ENCODE measurements at regions of chr3 and their contacts with region 1.

Region 1: GRCh38 chr3:125594581-125595011 is 701 bp downstream of the OSBPL11 start:
- DNase-seq: peak in 4 of 9 donors; percentile 10 to 25 (median 16)
- ATAC-seq: no peak
- H3K4me3 ChIP-seq: peak overlapping the region; percentile 82
- H3K4me3 Mint-ChIP-seq: peak overlapping the region; percentile 90 to 99 (median 94)
- H3K27ac ChIP-seq: peak overlapping the region; percentile 90
- H3K27ac Mint-ChIP-seq: peak overlapping the region; percentile 73 to 95 (median 89)
- H3K4me1 ChIP-seq: peaks cover 4 to 15% of the 10 kb centered on the region in 2 donors
- H3K4me1 Mint-ChIP-seq: peaks cover 32 to 50% (median 42%) of the 10 kb centered on the region in 7 donors
- H3K27me3 ChIP-seq: no peaks in the 10 kb centered on the region
- H3K27me3 Mint-ChIP-seq: no peaks in the 10 kb centered on the region

Region 2: GRCh38 chr3:123816673-123817207 is 1777.9 kb before region 1 on chr3:
- CTCF ChIA-PET with region 1: no interaction called
- POLR2A ChIA-PET with region 1: no interaction called
- intact Hi-C with region 1: no loop called
- DNase-seq: no peak
- ATAC-seq: no peak
- H3K4me3 ChIP-seq: no peak overlapping the region
- H3K4me3 Mint-ChIP-seq: no peak overlapping the region
- H3K27ac ChIP-seq: no peak overlapping the region
- H3K27ac Mint-ChIP-seq: no peak overlapping the region
- H3K4me1 ChIP-seq: no peaks in the 10 kb centered on the region
- H3K4me1 Mint-ChIP-seq: no peaks in the 10 kb centered on the region
- H3K27me3 ChIP-seq: no peaks in the 10 kb centered on the region
- H3K27me3 Mint-ChIP-seq: peaks cover 0 to 27% (median 8%) of the 10 kb centered on the region in 5 donors

Region 3: GRCh38 chr3:123960781-123961507 is 1633.7 kb before region 1 on chr3 and contains the start of gene CCDC14:
- CTCF ChIA-PET with region 1: no interaction called
- POLR2A ChIA-PET with region 1: no interaction called
- intact Hi-C with region 1: loop called in 1 of 2 experiments (anchors 2 kb)
- DNase-seq: peak; percentile 43 to 81 (median 60)
- ATAC-seq: peak; percentile 91
- H3K4me3 ChIP-seq: peak within 1 kb of the TSS; percentile 85
- H3K4me3 Mint-ChIP-seq: peak within 1 kb of the TSS; percentile 93 to 98 (median 96)
- H3K27ac ChIP-seq: peak within 1 kb of the TSS; percentile 78
- H3K27ac Mint-ChIP-seq: peak within 1 kb of the TSS; percentile 82 to 96 (median 91)
- H3K4me1 ChIP-seq: peaks cover 0 to 12% of the 10 kb centered on the region in 2 donors
- H3K4me1 Mint-ChIP-seq: peaks cover 12 to 35% (median 30%) of the 10 kb centered on the region in 7 donors
- H3K27me3 ChIP-seq: no peaks in the 10 kb centered on the region
- H3K27me3 Mint-ChIP-seq: peaks cover 0 to 30% (median 8%) of the 10 kb centered on the region in 5 donors
- total RNA-seq, gene CCDC14: 24.6 to 48.1 (median 37.3) TPM

Region 4: GRCh38 chr3:125519678-125520589 is 74.7 kb before region 1 on chr3 and contains the start of gene SNX4:
- CTCF ChIA-PET with region 1: no interaction called
- POLR2A ChIA-PET with region 1: interaction called, 12 read pairs
- intact Hi-C with region 1: loop called (anchors 1 kb)
- DNase-seq: peak; percentile 70 to 87 (median 82)
- ATAC-seq: peak; percentile 97
- H3K4me3 ChIP-seq: peak within 1 kb of the TSS; percentile 71
- H3K4me3 Mint-ChIP-seq: peak within 1 kb of the TSS; percentile 89 to 98 (median 96)
- H3K27ac ChIP-seq: peak within 1 kb of the TSS; percentile 87
- H3K27ac Mint-ChIP-seq: peak within 1 kb of the TSS; percentile 85 to 96 (median 92)
- H3K4me1 ChIP-seq: peaks cover 0 to 4% of the 10 kb centered on the region in 2 donors
- H3K4me1 Mint-ChIP-seq: peaks cover 20 to 47% (median 37%) of the 10 kb centered on the region in 7 donors
- H3K27me3 ChIP-seq: no peaks in the 10 kb centered on the region
- H3K27me3 Mint-ChIP-seq: peaks cover 0 to 2% (median 0%) of the 10 kb centered on the region in 5 donors
- total RNA-seq, gene SNX4: 19.3 to 31.8 (median 25.2) TPM

Region 5: DNA sequence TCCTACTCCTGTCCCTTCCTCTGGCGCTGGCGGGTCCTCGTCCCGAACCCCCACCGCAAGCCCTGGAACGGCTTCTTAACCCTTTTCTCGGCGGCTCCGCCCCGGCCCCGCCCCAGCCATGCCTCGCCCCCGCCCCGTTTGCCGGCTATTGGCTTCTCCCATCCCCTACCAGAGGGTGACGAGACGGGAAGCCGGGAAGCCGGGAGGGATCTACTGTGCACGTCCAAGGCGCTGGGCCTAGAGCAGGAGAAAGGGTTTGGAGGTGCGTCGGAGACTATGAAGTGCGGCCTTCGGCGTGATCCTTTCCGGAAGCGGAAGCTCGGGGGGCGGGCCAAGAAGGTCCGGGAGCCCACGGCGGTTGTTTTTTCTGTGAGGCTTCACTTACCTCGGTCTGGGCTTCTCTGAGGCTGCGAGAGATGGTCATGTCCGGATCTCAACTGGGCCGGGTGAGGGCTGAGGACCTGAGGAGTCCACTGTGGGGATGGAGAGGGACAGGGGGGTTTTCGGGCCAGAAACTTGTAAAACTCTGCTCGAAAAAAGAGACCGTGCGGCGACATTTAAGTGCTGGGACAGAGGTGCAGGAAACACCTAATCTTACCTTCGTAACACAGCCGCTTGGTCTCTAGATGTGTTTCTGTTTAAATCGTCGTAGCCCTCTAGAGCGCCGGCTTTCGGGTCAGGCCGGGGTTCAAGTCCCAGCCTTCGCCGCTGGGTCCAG is 395.8 kb after region 1 on chr3:
- CTCF ChIA-PET with region 1: no interaction called
- POLR2A ChIA-PET with region 1: no interaction called
- intact Hi-C with region 1: loop called in 1 of 2 experiments (anchors 5 kb)
- DNase-seq: peak in 8 of 9 donors; percentile 57 to 84 (median 73)
- ATAC-seq: peak; percentile 91
- H3K4me3 ChIP-seq: peak overlapping the region; percentile 80
- H3K4me3 Mint-ChIP-seq: peak overlapping the region; percentile 95 to 100 (median 98)
- H3K27ac ChIP-seq: peak overlapping the region; percentile 82
- H3K27ac Mint-ChIP-seq: peak overlapping the region; percentile 92 to 100 (median 98)
- H3K4me1 ChIP-seq: peaks cover 5 to 7% of the 10 kb centered on the region in 2 donors
- H3K4me1 Mint-ChIP-seq: peaks cover 10 to 41% (median 25%) of the 10 kb centered on the region in 7 donors
- H3K27me3 ChIP-seq: no peaks in the 10 kb centered on the region
- H3K27me3 Mint-ChIP-seq: peaks cover 0 to 23% (median 0%) of the 10 kb centered on the region in 5 donors

Region 6: DNA sequence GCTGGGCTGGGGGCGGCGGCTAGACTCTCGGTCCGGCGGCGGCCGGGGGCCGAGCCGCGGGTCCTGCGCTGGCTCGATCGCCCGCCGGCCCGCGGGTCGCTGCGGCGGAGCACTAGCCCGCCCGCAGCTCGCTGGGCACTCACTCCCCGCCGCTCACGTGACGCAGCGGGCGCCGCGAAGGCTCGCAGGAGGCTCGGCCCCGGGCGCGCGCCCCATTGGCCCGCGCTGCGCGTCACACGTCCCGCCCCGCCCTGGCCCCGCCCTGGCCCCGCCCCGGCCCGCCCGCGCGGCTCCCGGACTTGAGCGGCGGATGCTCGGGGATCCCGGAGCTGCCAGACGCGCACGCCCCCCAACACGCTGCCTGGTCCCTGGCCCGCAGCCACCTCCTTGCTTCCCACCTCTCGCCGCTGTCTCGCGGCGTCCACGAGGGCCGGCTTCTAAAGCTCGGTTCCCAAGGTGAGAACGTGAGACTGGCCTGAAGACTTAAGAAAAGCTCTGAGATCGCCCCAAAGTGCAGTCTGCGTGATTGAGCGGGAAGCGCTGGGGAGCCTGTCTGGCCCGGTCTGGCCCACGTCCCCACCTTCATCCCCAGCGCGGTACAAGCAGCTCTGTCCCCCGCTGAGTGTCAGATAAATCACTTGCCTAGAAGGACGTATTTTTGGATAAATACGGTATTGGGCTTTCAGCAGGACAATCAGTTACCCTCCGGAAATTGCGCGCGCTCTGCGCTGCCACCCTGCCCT is 762.9 kb after region 1 on chr3 and contains the start of gene KLF15:
- CTCF ChIA-PET with region 1: no interaction called
- POLR2A ChIA-PET with region 1: no interaction called
- intact Hi-C with region 1: loop called in 1 of 2 experiments (anchors 5 kb)
- DNase-seq: peak; percentile 50 to 84 (median 66)
- ATAC-seq: peak; percentile 95
- H3K4me3 ChIP-seq: peak within 1 kb of the TSS; percentile 67
- H3K4me3 Mint-ChIP-seq: peak within 1 kb of the TSS; percentile 89 to 95 (median 91)
- H3K27ac ChIP-seq: no peak within 1 kb of the TSS
- H3K27ac Mint-ChIP-seq: peak within 1 kb of the TSS in 5 of 9 donors; percentile 45 to 93 (median 72)
- H3K4me1 ChIP-seq: peaks cover 4 to 7% of the 10 kb centered on the region in 2 donors
- H3K4me1 Mint-ChIP-seq: peaks cover 4 to 17% (median 11%) of the 10 kb centered on the region in 7 donors
- H3K27me3 ChIP-seq: peaks cover 9 to 10% of the 10 kb centered on the region in 2 donors
- H3K27me3 Mint-ChIP-seq: peaks cover 45 to 52% (median 46%) of the 10 kb centered on the region in 5 donors
- total RNA-seq, gene KLF15: 0.57 to 0.81 TPM in 2 of 5 experiments, not detected in the others

Region 7: GRCh38 chr3:126654571-126655383 is 1060.2 kb after region 1 on chr3 and contains the start of gene TXNRD3:
- CTCF ChIA-PET with region 1: no interaction called
- POLR2A ChIA-PET with region 1: no interaction called
- intact Hi-C with region 1: no loop called
- DNase-seq: peak; percentile 52 to 76 (median 71)
- ATAC-seq: peak; percentile 93
- H3K4me3 ChIP-seq: peak within 1 kb of the TSS; percentile 46
- H3K4me3 Mint-ChIP-seq: peak within 1 kb of the TSS; percentile 83 to 93 (median 89)
- H3K27ac ChIP-seq: peak within 1 kb of the TSS; percentile 51
- H3K27ac Mint-ChIP-seq: peak within 1 kb of the TSS in 7 of 9 donors; percentile 18 to 91 (median 51)
- H3K4me1 ChIP-seq: peaks cover 0 to 3% of the 10 kb centered on the region in 2 donors
- H3K4me1 Mint-ChIP-seq: peaks cover 4 to 19% (median 10%) of the 10 kb centered on the region in 7 donors
- H3K27me3 ChIP-seq: peaks cover 0 to 4% of the 10 kb centered on the region in 2 donors
- H3K27me3 Mint-ChIP-seq: peaks cover 0 to 51% (median 4%) of the 10 kb centered on the region in 5 donors
- total RNA-seq, gene TXNRD3: 0.46 to 4.8 (median 3.2) TPM

Region 8: DNA sequence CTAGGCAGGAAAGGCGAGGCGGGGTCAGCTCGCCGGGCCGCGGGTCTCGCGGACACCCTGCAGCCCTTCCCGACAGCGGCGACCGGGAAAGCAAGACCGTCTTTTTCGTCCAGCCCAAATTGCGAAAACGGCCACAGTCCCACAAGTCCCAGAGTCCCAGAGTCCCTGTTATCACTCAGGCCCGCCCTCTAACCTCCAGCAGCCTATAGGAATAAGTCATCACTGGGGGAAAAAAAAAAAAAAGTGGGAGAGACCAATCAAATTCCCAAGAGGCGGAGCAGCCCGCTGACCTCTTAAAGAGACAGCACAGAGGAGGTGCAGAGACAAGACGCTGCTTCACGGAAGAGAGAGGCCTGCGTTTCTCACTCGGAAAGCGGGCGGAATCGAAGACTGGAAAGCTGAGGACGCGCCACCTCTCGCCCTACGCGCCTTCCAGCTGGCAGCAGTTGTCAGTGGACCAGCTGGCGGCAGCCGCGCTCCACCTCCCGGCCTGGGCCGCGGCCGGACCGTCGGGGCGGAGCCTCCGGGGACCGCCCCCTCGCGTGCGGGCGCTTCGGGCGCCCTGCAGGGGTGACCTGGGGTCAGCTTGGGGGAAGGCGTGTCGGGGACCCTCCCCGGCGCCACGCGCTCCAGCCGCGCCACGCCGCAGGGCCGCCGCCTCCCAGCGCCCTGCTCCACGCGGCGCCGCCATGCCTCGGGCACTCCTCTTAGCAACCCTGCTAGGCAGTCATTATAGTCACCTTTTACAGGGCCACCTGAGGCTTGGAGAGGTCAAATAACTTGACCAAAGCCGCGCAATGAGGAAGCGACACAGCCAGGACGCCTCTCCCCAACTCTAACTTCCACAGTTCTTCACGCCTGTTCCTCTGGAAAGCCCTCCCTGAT is 1996.2 kb after region 1 on chr3 and contains the start of gene TPRA1:
- CTCF ChIA-PET with region 1: no interaction called
- POLR2A ChIA-PET with region 1: no interaction called
- intact Hi-C with region 1: loop called in 1 of 2 experiments (anchors 10 kb)
- DNase-seq: peak; percentile 58 to 90 (median 85)
- ATAC-seq: peak; percentile 90
- H3K4me3 ChIP-seq: peak within 1 kb of the TSS; percentile 91
- H3K4me3 Mint-ChIP-seq: peak within 1 kb of the TSS; percentile 86 to 99 (median 96)
- H3K27ac ChIP-seq: peak within 1 kb of the TSS; percentile 80
- H3K27ac Mint-ChIP-seq: peak within 1 kb of the TSS; percentile 86 to 96 (median 94)
- H3K4me1 ChIP-seq: peaks cover 11 to 12% of the 10 kb centered on the region in 2 donors
- H3K4me1 Mint-ChIP-seq: peaks cover 14 to 51% (median 43%) of the 10 kb centered on the region in 7 donors
- H3K27me3 ChIP-seq: no peaks in the 10 kb centered on the region
- H3K27me3 Mint-ChIP-seq: no peaks in the 10 kb centered on the region
- total RNA-seq, gene TPRA1: 13.6 to 30.6 (median 24.5) TPM

Measured in naive thymus-derived CD4-positive, alpha-beta T cell (primary cell).